ENCODE measurements at regions of chr7 and their contacts with region 1.

Region 1: GRCh38 chr7:16492513-16493062 is 27.1 kb upstream of the SOSTDC1 start:
- DNase-seq: no peak
- H3K4me3 ChIP-seq: no peak overlapping the region
- H3K27ac ChIP-seq: no peak overlapping the region
- H3K4me1 ChIP-seq: no peaks in the 10 kb centered on the region
- H3K27me3 ChIP-seq: no peaks in the 10 kb centered on the region
- CTCF ChIP-seq: no peak
- POLR2A ChIP-seq: no peak

Region 2: DNA sequence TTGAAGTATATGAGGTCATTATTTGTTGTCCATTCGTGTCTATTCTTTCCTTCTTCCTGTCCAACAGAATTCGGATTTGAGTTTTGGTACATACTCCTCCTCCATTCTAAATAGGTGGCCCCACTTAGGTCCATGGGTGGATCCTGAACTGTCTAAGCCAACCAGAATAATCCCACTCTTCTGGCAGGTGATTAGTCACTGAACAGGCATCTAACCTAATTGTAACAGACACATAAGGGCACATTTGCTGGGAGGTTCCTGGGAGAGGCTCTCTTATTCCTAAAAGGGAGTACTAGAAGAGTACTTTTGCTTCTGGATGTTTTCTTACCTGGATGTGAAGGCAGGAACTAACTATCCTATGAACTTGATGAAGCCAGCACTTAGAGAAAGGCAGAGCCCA is 50.9 kb after region 1 on chr7:
- intact Hi-C with region 1: no loop called
- DNase-seq: no peak
- H3K4me3 ChIP-seq: no peak overlapping the region
- H3K27ac ChIP-seq: no peak overlapping the region
- H3K4me1 ChIP-seq: no peaks in the 10 kb centered on the region
- H3K27me3 ChIP-seq: no peaks in the 10 kb centered on the region
- CTCF ChIP-seq: no peak
- POLR2A ChIP-seq: no peak

Region 3: DNA sequence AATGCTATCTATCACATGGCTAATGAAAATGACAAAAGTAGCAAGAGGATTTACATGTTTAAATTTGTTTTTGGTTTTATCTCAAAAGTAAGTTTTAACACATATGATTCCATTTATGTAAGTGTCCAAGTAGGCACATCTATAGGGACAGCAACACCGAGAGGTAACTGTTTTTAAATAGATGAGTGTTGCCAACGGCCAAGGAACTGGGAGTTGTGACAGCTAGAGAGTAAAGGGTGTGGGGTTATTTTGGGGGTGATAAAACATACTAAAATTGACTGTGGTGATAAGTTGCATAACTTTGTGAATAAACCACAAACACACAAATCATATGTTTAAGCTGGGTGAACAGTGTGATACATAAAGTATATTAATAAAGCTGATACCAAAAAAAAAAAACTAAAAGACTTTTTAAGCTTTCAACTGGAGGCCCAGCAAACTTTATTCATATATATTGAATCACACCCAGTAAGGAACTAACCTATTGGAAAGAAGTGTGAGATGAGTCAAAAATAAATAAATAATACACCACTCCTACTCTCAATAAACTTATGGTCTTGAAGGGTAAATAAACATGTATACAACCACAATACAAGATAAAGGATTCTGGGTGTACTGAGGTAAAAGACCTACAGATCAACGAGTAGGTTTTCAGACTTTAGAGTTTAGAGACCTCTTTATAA is 67.0 kb after region 1 on chr7:
- intact Hi-C with region 1: loop called (anchors 10 kb)
- DNase-seq: no peak
- H3K4me3 ChIP-seq: no peak overlapping the region
- H3K27ac ChIP-seq: no peak overlapping the region
- H3K4me1 ChIP-seq: no peaks in the 10 kb centered on the region
- H3K27me3 ChIP-seq: no peaks in the 10 kb centered on the region
- CTCF ChIP-seq: no peak
- POLR2A ChIP-seq: no peak

Measured in breast epithelium (tissue), 4 donors.